Mammary epithelial cell (primary cell): ENCODE measurements at regions of chr3 and their contacts with region 1.

Region 1: GRCh38 chr3:61251174-61251972 is at the start of gene FHIT:
- DNase-seq: peak; percentile 86
- H3K4me3 ChIP-seq: peak within 1 kb of the TSS; percentile 65 to 74 (median 69)
- H3K27ac ChIP-seq: peak within 1 kb of the TSS; percentile 31
- H3K4me1 ChIP-seq: peaks cover 13% of the 10 kb centered on the region
- H3K27me3 ChIP-seq: peaks cover 2% of the 10 kb centered on the region
- CTCF ChIP-seq: no peak
- total RNA-seq, gene FHIT: 5.4 to 6.3 TPM

Region 2: DNA sequence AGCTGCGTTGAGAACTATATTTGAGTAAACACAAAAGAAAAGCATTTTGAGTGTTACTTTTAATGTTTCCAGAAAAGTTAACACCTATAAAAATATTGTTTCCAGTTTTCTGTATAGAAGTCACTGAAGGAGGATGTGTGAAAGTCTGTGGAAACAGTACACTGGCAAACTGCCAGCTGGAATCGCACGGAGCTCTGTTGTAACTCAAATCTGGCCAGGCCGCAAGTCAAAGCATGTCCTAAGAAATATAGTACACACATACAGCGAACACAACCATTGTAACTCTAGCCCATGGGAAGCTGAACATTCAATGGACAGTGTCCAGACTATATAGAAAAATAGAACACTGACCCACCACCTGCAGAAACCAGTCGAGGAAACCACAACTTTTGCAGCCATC is 657.3 kb before region 1 on chr3:
- CTCF ChIA-PET with region 1: no interaction called
- dilution Hi-C with region 1: no loop called
- in situ Hi-C with region 1: no loop called
- intact Hi-C with region 1: loop called (anchors 5 kb)
- DNase-seq: peak; percentile 86
- H3K4me3 ChIP-seq: no peak overlapping the region
- H3K27ac ChIP-seq: no peak overlapping the region
- H3K4me1 ChIP-seq: peaks cover 22% of the 10 kb centered on the region
- H3K27me3 ChIP-seq: no peaks in the 10 kb centered on the region
- CTCF ChIP-seq: no peak

Region 3: GRCh38 chr3:60954048-60954447 is 297.3 kb before region 1 on chr3:
- CTCF ChIA-PET with region 1: no interaction called
- dilution Hi-C with region 1: no loop called
- in situ Hi-C with region 1: no loop called
- intact Hi-C with region 1: loop called (anchors 10 kb)
- DNase-seq: no peak
- H3K4me3 ChIP-seq: no peak overlapping the region
- H3K27ac ChIP-seq: no peak overlapping the region
- H3K4me1 ChIP-seq: peaks cover 5% of the 10 kb centered on the region
- H3K27me3 ChIP-seq: no peaks in the 10 kb centered on the region
- CTCF ChIP-seq: no peak

Region 4: DNA sequence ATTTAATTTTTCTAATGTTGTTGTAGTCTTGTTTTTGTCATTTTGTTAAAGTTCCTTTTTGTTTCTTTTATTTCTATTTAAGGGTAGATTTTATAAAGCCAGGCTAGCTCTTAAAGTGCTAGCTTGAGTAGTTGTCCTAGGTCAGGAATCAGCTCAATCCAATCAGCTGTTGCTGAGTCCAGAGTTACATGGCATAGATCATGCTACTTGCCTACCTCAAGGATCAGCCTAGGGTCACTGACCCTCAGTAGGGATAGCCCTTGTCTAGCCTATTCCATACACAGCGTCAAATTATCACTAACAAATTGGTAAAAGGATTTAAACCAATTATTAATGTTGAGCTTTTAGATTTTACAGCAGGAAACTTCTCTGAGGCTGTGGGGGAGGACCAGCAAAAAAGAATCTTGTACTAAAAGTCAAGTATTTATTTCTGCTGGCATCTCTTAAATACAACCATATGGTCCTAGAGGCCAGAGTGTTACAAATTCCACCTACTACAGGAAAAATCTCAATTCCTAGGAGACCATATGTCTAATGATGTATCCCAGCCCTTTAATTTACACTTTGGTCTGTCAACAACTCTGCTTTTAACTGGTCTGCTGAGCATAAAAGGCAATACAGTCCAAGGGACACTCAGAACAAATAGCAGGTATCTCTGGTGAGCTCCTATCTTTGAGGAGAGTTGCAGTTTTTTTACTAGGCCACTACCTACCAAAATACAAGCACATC is 171.7 kb after region 1 on chr3:
- CTCF ChIA-PET with region 1: no interaction called
- dilution Hi-C with region 1: no loop called
- in situ Hi-C with region 1: no loop called
- intact Hi-C with region 1: no loop called
- DNase-seq: no peak
- H3K4me3 ChIP-seq: no peak overlapping the region
- H3K27ac ChIP-seq: no peak overlapping the region
- H3K4me1 ChIP-seq: no peaks in the 10 kb centered on the region
- H3K27me3 ChIP-seq: no peaks in the 10 kb centered on the region
- CTCF ChIP-seq: no peak